Caki2 (cell line): ENCODE measurements at regions of chr1 and their contacts with region 1.

Region 1: GRCh38 chr1:48061162-48062136 is 64.3 kb upstream of the TRABD2B start:
- DNase-seq: peak; percentile 68

Region 2: DNA sequence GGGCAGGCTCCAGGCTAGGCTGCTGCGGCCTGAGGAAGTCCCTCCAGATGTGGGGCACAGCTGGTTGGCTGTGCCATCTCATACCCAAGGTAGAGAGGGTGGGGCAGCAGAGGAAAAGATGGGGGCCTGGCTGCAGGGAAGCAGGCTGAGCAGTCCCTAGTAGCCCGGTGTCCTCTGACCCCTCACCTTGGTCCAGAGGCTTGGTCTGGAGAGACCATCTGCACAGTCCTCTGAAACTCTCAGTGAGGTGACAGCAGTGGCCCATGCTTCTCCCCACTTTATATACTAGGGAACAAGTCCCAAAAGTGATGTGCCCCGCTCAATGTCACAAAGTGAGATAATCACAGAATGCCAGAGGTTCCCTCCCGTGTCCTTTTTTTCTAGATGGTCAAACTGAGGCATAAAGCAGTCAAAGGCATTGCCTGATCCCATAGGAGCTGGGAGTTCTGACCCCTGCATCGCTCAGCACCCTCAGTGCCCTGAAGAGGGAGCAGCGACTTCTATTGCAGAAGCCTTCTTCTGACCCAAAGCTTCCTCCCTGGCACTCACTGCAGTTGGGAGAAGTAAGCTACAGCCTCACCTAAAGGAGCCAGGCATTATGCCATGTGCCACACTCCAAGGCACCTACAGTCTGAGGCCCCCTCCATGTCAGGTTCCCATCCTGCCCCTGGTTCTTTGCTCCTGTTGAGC is 109.8 kb before region 1 on chr1:
- in situ Hi-C with region 1: no loop called
- DNase-seq: no peak

Region 3: GRCh38 chr1:48007044-48007443 is 54.4 kb before region 1 on chr1:
- in situ Hi-C with region 1: loop called (anchors 10 kb)
- DNase-seq: peak; percentile 90

Region 4: GRCh38 chr1:48164571-48164970 is 103.1 kb after region 1 on chr1:
- in situ Hi-C with region 1: no loop called
- DNase-seq: no peak